WTC11 (cell line): ENCODE measurements at regions of chr7 and their contacts with region 1.

Region 1: DNA sequence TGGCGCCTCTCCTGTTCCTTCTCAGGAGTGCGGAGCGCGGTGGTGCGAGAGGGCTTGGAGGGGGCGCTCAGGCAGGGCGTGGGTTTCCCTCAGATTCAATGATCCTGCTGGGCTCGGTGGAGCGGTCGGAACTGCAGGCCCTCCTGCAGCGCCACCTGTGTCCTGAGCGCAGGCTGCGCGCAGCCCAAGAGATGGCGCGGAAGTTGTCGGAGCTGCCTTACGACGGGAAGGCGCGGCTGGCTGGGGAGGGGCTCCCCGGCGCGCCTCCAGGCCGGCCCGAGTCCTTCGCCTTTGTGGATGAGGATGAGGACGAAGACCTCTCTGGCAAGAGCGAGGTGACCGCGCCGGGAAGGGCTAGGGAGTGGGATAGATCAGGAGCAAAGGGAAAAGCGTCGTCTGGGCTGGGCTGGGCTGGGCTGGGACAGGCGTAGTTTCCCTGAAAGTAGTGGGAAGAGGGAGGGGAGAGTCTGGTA is 17.0 kb downstream of the FAM131B start:
- DNase-seq: peak; percentile 82
- ATAC-seq: peak; percentile 93
- H3K4me3 Mint-ChIP-seq: peak overlapping the region; percentile 79
- H3K27ac Mint-ChIP-seq: 0 out of 2 replicates have a peak overlapping the region, but pooled peaks have one; percentile 40
- H3K4me1 Mint-ChIP-seq: peaks cover 20% of the 10 kb centered on the region
- H3K27me3 Mint-ChIP-seq: peaks cover 21% of the 10 kb centered on the region
- CTCF ChIP-seq: no peak

Region 2: DNA sequence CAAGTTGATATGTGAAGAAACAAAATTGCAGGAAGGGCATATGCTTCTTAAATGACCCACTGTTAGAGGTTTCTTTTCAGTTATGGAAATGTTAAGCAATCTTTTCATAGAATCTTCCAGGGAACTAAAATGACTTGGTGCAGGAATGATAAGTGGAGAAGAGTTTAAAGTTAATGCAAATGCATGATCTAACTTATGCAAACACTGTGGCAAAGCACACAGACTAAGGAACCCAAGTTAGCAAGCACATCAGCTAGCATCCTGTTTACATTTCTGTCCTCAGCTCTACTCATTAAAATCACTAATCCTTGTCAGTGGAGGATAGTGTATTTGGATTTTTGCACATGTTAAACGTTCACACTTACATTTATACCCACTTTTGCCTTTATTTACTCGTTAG is 20.2 kb before region 1 on chr7:
- CTCF ChIA-PET with region 1: interaction called, 12 read pairs
- POLR2A ChIA-PET with region 1: interaction called, 4 read pairs
- DNase-seq: no peak
- ATAC-seq: no peak
- H3K4me3 Mint-ChIP-seq: no peak overlapping the region
- H3K27ac Mint-ChIP-seq: no peak overlapping the region
- H3K4me1 Mint-ChIP-seq: peaks cover 33% of the 10 kb centered on the region
- H3K27me3 Mint-ChIP-seq: no peaks in the 10 kb centered on the region
- CTCF ChIP-seq: no peak

Region 3: GRCh38 chr7:143355450-143356385 is 10.3 kb after region 1 on chr7:
- CTCF ChIA-PET with region 1: interaction called, 30 read pairs
- POLR2A ChIA-PET with region 1: interaction called, 3 read pairs
- DNase-seq: peak; percentile 38
- ATAC-seq: peak; percentile 65
- H3K4me3 Mint-ChIP-seq: no peak overlapping the region
- H3K27ac Mint-ChIP-seq: no peak overlapping the region; the same call in 1 of the 2 replicates
- H3K4me1 Mint-ChIP-seq: peaks cover 26% of the 10 kb centered on the region
- H3K27me3 Mint-ChIP-seq: peaks cover 4% of the 10 kb centered on the region; the same call in 1 of the 2 replicates
- CTCF ChIP-seq: no peak

Region 4: DNA sequence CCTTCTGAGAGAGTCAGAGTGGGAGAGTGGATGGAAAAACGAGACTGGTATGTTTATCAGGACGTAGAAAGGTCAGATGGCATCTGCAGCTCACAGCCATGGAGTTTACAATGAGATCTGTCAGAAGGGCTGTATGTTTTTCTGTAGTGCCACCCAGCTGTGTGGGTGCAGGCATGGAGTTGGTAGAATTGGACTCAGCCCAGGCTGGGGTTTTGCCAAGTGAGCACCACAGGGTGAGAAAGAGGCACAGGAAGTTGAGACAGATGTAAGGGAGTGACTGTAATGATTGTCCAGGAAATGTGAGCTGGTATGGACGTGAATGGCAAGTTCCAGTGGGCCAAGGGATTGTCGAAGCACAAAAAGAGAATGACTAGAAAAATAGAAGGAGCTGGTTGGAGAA is 26.6 kb after region 1 on chr7:
- CTCF ChIA-PET with region 1: interaction called, 27 read pairs
- POLR2A ChIA-PET with region 1: interaction called, 4 read pairs
- DNase-seq: no peak
- ATAC-seq: no peak
- H3K4me3 Mint-ChIP-seq: no peak overlapping the region
- H3K27ac Mint-ChIP-seq: peak overlapping the region; percentile 7
- H3K4me1 Mint-ChIP-seq: peaks cover 68% of the 10 kb centered on the region
- H3K27me3 Mint-ChIP-seq: no peaks in the 10 kb centered on the region; the same call in 1 of the 2 replicates
- CTCF ChIP-seq: no peak

Region 5: GRCh38 chr7:143380255-143380645 is 34.8 kb after region 1 on chr7:
- CTCF ChIA-PET with region 1: interaction called, 27 read pairs
- POLR2A ChIA-PET with region 1: no interaction called
- DNase-seq: peak; percentile 89
- ATAC-seq: peak; percentile 49
- H3K4me3 Mint-ChIP-seq: peak overlapping the region; percentile 76
- H3K27ac Mint-ChIP-seq: no peak overlapping the region
- H3K4me1 Mint-ChIP-seq: peaks cover 34% of the 10 kb centered on the region
- H3K27me3 Mint-ChIP-seq: no peaks in the 10 kb centered on the region
- CTCF ChIP-seq: peak; percentile 97

Region 6: DNA sequence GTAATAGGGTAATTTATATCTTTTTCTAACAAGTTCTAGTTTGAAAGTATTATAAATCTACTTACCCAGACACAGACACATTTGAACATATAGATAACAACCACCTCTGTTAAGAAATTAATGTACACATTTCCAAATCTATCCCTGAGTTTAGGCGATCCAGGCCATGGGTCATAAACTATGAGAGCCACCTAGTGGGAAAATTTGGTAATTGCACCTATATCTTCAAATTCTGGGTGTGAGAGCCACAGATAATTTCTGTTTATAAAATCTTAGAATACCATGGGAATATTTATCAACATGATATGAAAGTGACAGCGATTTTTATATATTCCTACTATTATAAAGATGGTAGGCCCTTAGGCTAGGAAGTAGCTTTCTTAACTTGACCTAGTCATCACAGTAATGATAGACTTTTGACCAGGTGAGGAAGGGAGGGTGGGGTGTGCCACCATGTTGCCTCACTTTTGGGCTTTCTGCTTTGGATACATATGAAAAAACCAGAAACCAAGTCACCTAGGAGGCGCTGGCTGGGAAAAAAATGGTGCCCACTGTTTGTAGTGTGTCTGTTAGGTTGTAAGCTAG is 71.2 kb after region 1 on chr7:
- CTCF ChIA-PET with region 1: interaction called, 17 read pairs
- POLR2A ChIA-PET with region 1: no interaction called
- DNase-seq: no peak
- ATAC-seq: no peak
- H3K4me3 Mint-ChIP-seq: no peak overlapping the region
- H3K27ac Mint-ChIP-seq: no peak overlapping the region
- H3K4me1 Mint-ChIP-seq: peaks cover 70% of the 10 kb centered on the region
- H3K27me3 Mint-ChIP-seq: no peaks in the 10 kb centered on the region
- CTCF ChIP-seq: peak; percentile 51